Activated CD4-positive, alpha-beta T cell treated with anti-CD3 and anti-CD28 coated beads, Interleukin-2, amount 10 ng/mL, durations not matched to agents 7 days and 5 days (primary cell): ENCODE measurements at regions of chr10 and their contacts with region 1.

Region 1: GRCh38 chr10:62050893-62051433 is 149.5 kb downstream of the ARID5B start:
- DNase-seq: peak; percentile 83
- H3K4me3 Mint-ChIP-seq: peak overlapping the region; percentile 86
- H3K27ac Mint-ChIP-seq: peak overlapping the region; percentile 98
- H3K4me1 Mint-ChIP-seq: peaks cover 95% of the 10 kb centered on the region
- H3K27me3 Mint-ChIP-seq: no peaks in the 10 kb centered on the region

Region 2: GRCh38 chr10:61903221-61903927 is 147.6 kb before region 1 on chr10:
- CTCF ChIA-PET with region 1: interaction called, 3 read pairs
- POLR2A ChIA-PET with region 1: interaction called, 26 read pairs
- DNase-seq: peak; percentile 73
- H3K4me3 Mint-ChIP-seq: peak overlapping the region; percentile 97
- H3K27ac Mint-ChIP-seq: peak overlapping the region; percentile 100
- H3K4me1 Mint-ChIP-seq: peaks cover 45% of the 10 kb centered on the region
- H3K27me3 Mint-ChIP-seq: no peaks in the 10 kb centered on the region

Region 3: DNA sequence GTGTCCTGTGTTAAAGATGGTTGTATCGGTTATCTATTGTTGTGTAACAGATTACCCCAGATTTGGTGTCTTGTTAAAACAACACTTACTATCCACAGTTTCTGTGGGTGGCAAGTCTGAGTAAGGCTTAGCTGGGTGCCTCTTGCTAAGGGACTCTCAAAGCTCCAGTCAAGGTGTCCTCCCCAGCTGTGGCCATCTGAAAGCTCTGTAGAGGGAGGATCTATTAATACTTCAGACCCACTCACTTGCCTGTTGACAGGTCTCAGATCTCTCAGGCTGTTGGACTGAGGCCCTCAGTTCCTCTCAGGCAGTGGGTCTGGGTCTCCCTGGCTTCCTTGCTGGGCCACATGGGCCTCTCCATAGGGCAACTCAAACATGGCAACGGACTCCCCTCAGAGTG is 129.8 kb before region 1 on chr10:
- CTCF ChIA-PET with region 1: no interaction called
- POLR2A ChIA-PET with region 1: no interaction called
- DNase-seq: no peak
- H3K4me3 Mint-ChIP-seq: no peak overlapping the region
- H3K27ac Mint-ChIP-seq: peak overlapping the region; percentile 68
- H3K4me1 Mint-ChIP-seq: peaks cover 64% of the 10 kb centered on the region
- H3K27me3 Mint-ChIP-seq: no peaks in the 10 kb centered on the region

Region 4: DNA sequence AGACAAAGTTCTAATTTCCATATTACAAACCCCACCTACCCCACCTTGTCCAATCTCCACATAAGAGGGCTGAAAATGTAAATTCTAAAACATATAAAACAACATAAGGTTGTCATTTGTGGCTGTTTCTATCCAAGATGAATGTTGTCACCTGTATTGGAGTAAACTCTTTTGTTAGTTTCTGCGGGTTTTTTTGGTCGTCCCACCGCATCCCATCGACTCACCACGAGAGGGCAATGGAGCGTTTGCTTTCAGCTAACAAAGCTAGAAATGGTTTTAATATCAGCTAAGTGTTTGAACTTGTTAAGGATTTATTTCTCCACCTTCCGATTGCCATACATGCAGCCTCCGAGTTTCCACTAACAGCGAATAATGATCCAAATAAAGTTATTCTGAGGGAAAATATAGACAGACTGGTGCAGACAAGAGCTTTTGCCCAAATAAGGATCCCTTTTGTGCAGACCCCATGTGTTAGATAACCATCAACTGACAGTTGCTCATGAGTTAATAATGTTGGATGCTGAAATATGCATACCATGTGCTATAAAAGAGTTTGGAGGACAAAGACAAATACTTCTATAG is 12.3 kb before region 1 on chr10:
- CTCF ChIA-PET with region 1: interaction called, 38 read pairs
- POLR2A ChIA-PET with region 1: interaction called, 9 read pairs
- DNase-seq: peak; percentile 87
- H3K4me3 Mint-ChIP-seq: peak overlapping the region; percentile 11
- H3K27ac Mint-ChIP-seq: peak overlapping the region; percentile 84
- H3K4me1 Mint-ChIP-seq: peaks cover 86% of the 10 kb centered on the region
- H3K27me3 Mint-ChIP-seq: no peaks in the 10 kb centered on the region

Region 5: GRCh38 chr10:62063795-62064472 is 13.0 kb after region 1 on chr10:
- CTCF ChIA-PET with region 1: interaction called, 19 read pairs
- POLR2A ChIA-PET with region 1: no interaction called
- DNase-seq: no peak
- H3K4me3 Mint-ChIP-seq: no peak overlapping the region
- H3K27ac Mint-ChIP-seq: peak overlapping the region; percentile 79
- H3K4me1 Mint-ChIP-seq: peaks cover 82% of the 10 kb centered on the region
- H3K27me3 Mint-ChIP-seq: no peaks in the 10 kb centered on the region

Region 6: GRCh38 chr10:62071846-62072281 is 20.9 kb after region 1 on chr10:
- CTCF ChIA-PET with region 1: interaction called, 12 read pairs
- POLR2A ChIA-PET with region 1: no interaction called
- DNase-seq: no peak
- H3K4me3 Mint-ChIP-seq: no peak overlapping the region
- H3K27ac Mint-ChIP-seq: peak overlapping the region; percentile 61
- H3K4me1 Mint-ChIP-seq: peaks cover 69% of the 10 kb centered on the region
- H3K27me3 Mint-ChIP-seq: no peaks in the 10 kb centered on the region

Region 7: DNA sequence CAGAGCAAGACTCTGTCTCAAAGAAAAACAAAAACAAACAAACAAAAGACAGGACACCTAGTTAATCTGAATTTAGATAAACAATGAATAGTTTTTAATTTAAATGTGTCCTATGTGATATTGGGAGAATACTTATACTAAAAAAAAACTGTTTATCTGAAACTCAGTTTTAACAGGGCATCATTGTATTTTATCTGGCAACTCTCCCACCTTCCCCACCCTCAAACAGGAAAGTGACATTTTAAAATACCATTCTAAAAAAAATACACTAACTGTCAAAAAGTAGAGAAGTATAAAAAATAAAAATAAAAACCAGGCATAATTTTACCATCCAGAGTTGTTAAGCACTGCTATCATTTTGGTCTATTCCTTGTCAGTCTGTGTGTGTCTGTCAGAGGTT is 98.7 kb after region 1 on chr10:
- CTCF ChIA-PET with region 1: no interaction called
- POLR2A ChIA-PET with region 1: no interaction called
- DNase-seq: no peak
- H3K4me3 Mint-ChIP-seq: no peak overlapping the region
- H3K27ac Mint-ChIP-seq: no peak overlapping the region
- H3K4me1 Mint-ChIP-seq: peaks cover 3% of the 10 kb centered on the region
- H3K27me3 Mint-ChIP-seq: no peaks in the 10 kb centered on the region

Region 8: GRCh38 chr10:62244780-62245467 is 194.0 kb after region 1 on chr10:
- CTCF ChIA-PET with region 1: interaction called, 13 read pairs
- POLR2A ChIA-PET with region 1: interaction called, 4 read pairs
- DNase-seq: peak; percentile 78
- H3K4me3 Mint-ChIP-seq: no peak overlapping the region
- H3K27ac Mint-ChIP-seq: peak overlapping the region; percentile 76
- H3K4me1 Mint-ChIP-seq: peaks cover 37% of the 10 kb centered on the region
- H3K27me3 Mint-ChIP-seq: no peaks in the 10 kb centered on the region

Region 9: GRCh38 chr10:62323751-62324150 is 272.8 kb after region 1 on chr10:
- CTCF ChIA-PET with region 1: no interaction called
- POLR2A ChIA-PET with region 1: no interaction called
- DNase-seq: no peak
- H3K4me3 Mint-ChIP-seq: no peak overlapping the region
- H3K27ac Mint-ChIP-seq: no peak overlapping the region
- H3K4me1 Mint-ChIP-seq: no peaks in the 10 kb centered on the region
- H3K27me3 Mint-ChIP-seq: peaks cover 17% of the 10 kb centered on the region

Region 10: DNA sequence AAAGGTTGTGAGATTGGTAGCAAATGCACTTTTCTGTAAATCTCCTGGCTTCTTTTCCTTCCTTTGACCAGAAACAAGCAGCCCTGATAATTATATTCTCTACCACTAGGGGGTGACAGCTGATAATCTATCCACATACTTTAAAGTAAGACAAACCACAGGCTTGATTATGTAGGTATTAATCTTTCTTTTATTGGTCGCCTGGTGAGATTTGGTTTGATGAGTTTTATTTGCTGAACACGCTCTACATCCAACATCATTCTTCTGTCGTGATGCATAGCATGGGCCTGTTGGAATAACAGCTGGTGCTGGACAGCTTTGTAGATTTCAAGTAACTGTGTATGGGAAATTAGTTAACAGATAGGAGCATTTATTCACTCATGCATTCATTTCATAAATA is 386.7 kb after region 1 on chr10:
- CTCF ChIA-PET with region 1: no interaction called
- POLR2A ChIA-PET with region 1: no interaction called
- DNase-seq: peak; percentile 56
- H3K4me3 Mint-ChIP-seq: no peak overlapping the region
- H3K27ac Mint-ChIP-seq: no peak overlapping the region
- H3K4me1 Mint-ChIP-seq: peaks cover 8% of the 10 kb centered on the region
- H3K27me3 Mint-ChIP-seq: peaks cover 11% of the 10 kb centered on the region